ENCODE measurements at regions of chr3 and their contacts with region 1.

Region 1: GRCh38 chr3:181210275-181210674 is 220.7 kb upstream of the DNAJC19 start:
- DNase-seq: no peak
- ATAC-seq: no peak

Region 2: DNA sequence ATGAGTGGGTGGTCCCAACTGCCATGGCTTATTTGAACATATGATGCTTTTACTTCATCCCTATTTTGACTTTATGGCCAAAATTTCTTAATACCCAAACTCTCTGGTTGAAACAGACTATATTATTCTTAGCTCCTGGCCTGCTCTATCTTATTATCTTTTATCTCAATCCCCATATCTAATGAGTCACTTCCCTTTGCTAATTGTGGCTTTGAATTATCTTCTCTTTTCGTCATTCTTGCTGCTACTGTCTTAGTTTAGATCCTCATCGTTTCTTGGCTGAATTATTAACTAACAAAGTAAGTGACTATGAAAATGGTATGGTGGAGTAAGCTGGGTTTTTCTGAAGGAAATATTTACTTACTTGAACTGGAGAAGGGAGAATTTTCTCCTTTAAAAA is 192.6 kb before region 1 on chr3:
- intact Hi-C with region 1: no loop called
- DNase-seq: no peak
- ATAC-seq: no peak

Region 3: DNA sequence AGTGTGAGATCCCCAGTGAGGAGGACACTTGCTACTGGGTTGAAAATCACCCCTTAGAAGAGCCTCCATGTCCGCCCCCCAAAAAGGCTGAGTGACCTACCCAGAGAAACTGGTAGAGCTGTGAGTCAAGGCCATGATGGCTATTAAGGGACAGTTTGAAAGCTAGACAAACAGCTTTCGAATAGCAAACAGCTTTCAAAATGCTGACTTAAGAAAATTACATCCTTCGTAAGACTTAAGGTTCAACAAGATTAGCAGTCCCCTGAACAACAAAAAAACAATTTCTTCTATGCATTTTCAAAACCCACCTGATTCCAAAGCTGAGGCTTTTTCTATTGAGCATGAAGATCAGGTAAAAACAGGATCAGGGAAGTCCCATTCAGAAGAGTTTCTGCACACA is 231.8 kb after region 1 on chr3:
- intact Hi-C with region 1: no loop called
- DNase-seq: no peak
- ATAC-seq: no peak

Region 4: DNA sequence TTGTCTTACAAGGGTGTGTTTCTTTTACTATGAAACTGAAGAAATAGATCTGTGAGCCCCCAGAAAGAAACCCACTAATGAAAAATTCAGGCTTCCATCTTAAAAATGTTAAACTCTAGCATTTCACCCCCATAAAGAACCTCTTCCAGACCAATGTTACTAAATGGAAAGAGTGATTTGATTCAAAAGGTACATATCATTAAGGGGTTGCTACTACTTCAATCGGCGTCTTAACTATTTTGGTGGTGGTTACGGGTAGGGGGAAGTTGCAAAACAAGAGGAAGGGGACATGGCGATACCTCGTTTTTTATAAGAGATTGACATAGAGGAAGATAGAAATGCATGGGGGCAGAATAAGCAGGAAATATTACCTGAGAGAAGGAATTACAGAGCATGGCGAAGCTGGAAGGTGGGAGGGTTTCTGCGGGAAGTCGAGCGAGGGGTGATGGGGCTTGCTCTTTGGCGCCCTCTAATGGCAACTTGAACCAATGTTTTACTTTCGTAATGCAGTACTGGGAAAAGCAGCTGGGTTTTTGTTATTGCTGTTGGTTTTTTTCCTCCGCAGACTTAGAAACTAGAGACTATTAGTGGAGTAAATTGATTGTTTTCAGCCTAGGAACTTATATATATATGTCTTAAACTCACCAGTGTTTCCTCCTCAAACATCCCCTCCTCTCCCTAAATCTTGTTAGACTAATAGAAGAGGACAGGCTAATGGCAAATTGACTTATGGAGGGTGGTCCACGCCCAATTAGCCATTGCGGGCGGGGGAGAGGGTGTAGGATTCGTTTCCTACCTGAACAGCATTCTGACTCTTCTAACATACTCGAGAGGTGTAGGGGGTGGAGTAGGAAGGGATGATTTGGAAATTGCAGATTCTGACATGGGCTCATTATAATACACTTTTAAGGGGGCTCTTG is 490.2 kb after region 1 on chr3:
- intact Hi-C with region 1: loop called in 1 of 2 experiments (anchors 5 kb)
- DNase-seq: peak; percentile 48
- ATAC-seq: peak; percentile 75 to 81

Region 5: DNA sequence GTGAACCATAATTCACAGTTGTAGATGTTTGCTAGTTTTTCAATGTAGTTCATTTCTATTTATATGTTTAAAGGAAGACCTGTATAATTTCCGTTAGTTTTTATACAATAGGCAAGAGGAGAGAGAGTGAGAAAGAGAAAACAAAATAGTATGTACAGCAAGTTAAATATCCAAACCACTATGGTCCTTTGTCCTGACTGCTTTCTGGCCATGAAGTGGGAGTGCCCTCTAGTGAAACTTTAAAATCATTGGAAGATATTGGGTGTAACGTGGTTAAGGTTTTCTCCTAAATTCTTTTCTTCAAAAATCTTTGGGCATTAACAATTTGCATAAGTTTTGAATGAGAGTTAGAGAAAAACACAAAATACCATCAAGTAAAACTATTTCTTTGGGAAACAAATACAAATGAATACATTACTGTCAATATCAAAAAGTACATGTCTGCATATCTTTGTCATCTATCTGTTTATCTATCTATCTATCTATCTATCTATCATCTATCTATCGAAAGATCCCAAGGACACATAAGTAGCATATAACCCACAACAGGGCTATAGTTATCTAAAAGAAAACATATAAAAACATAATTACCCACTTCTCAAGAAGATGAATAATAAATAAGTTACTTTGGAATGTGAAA is 1048.4 kb after region 1 on chr3:
- intact Hi-C with region 1: loop called in 1 of 2 experiments (anchors 5 kb)
- DNase-seq: no peak
- ATAC-seq: peak in 1 of 2 donors; percentile 67

Measured in left cardiac atrium (tissue), 4 donors.